ENCODE measurements at regions of chr19 and their contacts with region 1.

Region 1: GRCh38 chr19:43983912-43984686 is at the start of gene ZNF155:
- DNase-seq: peak; percentile 95
- H3K4me3 ChIP-seq: peak within 1 kb of the TSS; percentile 32 to 75 (median 68)
- H3K27ac ChIP-seq: peak within 1 kb of the TSS; percentile 23
- H3K4me1 ChIP-seq: peaks cover 6% of the 10 kb centered on the region
- H3K27me3 ChIP-seq: no peaks in the 10 kb centered on the region
- CTCF ChIP-seq: no peak
- POLR2A ChIP-seq: peak; percentile 39
- total RNA-seq, gene ZNF155: 5.9 and 7.6 TPM in 2 replicates

Region 2: GRCh38 chr19:44071824-44072542 is 87.9 kb after region 1 on chr19 and contains the start of gene ZNF284:
- CTCF ChIA-PET with region 1: no interaction called
- POLR2A ChIA-PET with region 1: no interaction called
- dilution Hi-C with region 1: no loop called
- intact Hi-C with region 1: loop called (anchors 1 kb)
- DNase-seq: peak; percentile 91
- H3K4me3 ChIP-seq: peak within 1 kb of the TSS; percentile 10 to 67 (median 55)
- H3K27ac ChIP-seq: peak within 1 kb of the TSS; percentile 14
- H3K4me1 ChIP-seq: peaks cover 10% of the 10 kb centered on the region
- H3K27me3 ChIP-seq: no peaks in the 10 kb centered on the region
- CTCF ChIP-seq: no peak
- POLR2A ChIP-seq: peak; percentile 64
- total RNA-seq, gene ZNF284: 2.4 and 2.7 TPM in 2 replicates

Region 3: DNA sequence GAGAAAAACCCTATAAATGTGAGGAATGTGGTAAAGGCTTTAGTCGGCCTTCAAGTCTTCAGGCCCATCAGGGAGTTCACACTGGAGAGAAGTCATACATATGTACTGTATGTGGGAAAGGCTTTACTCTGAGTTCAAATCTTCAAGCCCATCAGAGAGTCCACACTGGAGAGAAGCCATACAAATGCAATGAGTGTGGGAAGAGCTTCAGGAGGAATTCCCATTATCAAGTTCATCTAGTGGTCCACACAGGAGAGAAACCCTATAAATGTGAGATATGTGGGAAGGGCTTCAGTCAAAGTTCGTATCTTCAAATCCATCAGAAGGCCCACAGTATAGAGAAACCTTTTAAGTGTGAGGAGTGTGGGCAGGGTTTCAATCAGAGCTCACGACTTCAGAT is 192.5 kb after region 1 on chr19:
- CTCF ChIA-PET with region 1: no interaction called
- POLR2A ChIA-PET with region 1: no interaction called
- dilution Hi-C with region 1: no loop called
- intact Hi-C with region 1: no loop called
- DNase-seq: no peak
- H3K4me3 ChIP-seq: no peak overlapping the region
- H3K27ac ChIP-seq: no peak overlapping the region
- H3K4me1 ChIP-seq: no peaks in the 10 kb centered on the region
- H3K27me3 ChIP-seq: no peaks in the 10 kb centered on the region
- CTCF ChIP-seq: no peak
- POLR2A ChIP-seq: no peak

Region 4: GRCh38 chr19:44725251-44725650 is 741.2 kb after region 1 on chr19:
- CTCF ChIA-PET with region 1: no interaction called
- POLR2A ChIA-PET with region 1: no interaction called
- dilution Hi-C with region 1: no loop called
- intact Hi-C with region 1: no loop called
- DNase-seq: no peak
- H3K4me3 ChIP-seq: no peak overlapping the region
- H3K27ac ChIP-seq: no peak overlapping the region
- H3K4me1 ChIP-seq: peaks cover 29% of the 10 kb centered on the region
- H3K27me3 ChIP-seq: no peaks in the 10 kb centered on the region
- CTCF ChIP-seq: no peak
- POLR2A ChIP-seq: no peak

Measured in endothelial cell of umbilical vein (primary cell).